Common myeloid progenitor, CD34-positive (primary cell): ENCODE measurements at regions of chr21 and their contacts with region 1.

Region 1: DNA sequence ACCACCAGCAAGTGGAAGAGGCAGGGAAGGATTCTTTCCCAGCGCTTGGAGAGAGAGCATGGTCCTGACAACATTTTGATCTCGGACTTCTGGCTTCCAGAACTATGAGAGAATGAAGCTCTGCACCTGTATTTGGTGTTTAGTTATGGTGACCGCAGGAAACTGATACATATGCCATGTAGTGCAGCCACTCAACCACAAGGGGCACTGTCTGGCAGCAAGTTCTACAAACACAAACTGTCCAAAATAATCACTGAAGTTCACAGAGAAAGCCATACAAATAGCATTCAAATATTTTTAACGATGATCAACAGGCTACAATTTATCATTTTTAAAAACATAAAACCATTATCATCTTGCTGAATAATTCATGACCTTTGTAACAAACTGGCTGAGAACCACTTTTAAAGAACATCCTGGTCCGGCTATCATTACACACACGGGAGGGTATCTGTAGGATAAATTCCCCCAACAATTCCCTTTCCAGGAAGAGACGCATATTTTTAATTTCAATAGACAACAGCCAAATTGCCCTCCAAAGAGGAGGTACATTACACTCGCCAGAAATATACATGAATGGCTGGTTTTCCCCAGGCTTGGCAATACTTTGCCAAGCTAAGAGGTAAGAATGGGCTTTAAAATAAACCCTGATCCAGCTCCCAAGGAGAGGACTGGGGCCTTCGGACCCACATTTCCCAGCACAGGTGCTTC is 9.2 kb upstream of the CBR3 start:
- DNase-seq: peak; percentile 56 to 79 (median 76)
- H3K4me3 ChIP-seq: no peak overlapping the region
- H3K27ac ChIP-seq: no peak overlapping the region
- H3K4me1 ChIP-seq: peaks cover 0 to 17% (median 13%) of the 10 kb centered on the region in 4 experiments
- H3K27me3 ChIP-seq: no peaks in the 10 kb centered on the region

Region 2: GRCh38 chr21:35974818-35975217 is 150.8 kb before region 1 on chr21:
- CTCF ChIA-PET with region 1: no interaction called
- POLR2A ChIA-PET with region 1: no interaction called
- DNase-seq: no peak
- H3K4me3 ChIP-seq: no peak overlapping the region
- H3K27ac ChIP-seq: no peak overlapping the region
- H3K4me1 ChIP-seq: no peaks in the 10 kb centered on the region
- H3K27me3 ChIP-seq: peaks cover 0 to 10% (median 2%) of the 10 kb centered on the region in 5 experiments

Region 3: GRCh38 chr21:36113647-36114428 is 11.8 kb before region 1 on chr21:
- CTCF ChIA-PET with region 1: interaction called, 10 read pairs
- POLR2A ChIA-PET with region 1: no interaction called
- DNase-seq: peak in 2 of 3 donors; percentile 41 to 57
- H3K4me3 ChIP-seq: peak overlapping the region in 4 of 7 experiments; percentile 24 to 58 (median 42)
- H3K27ac ChIP-seq: no peak overlapping the region
- H3K4me1 ChIP-seq: peaks cover 0 to 11% (median 6%) of the 10 kb centered on the region in 4 experiments
- H3K27me3 ChIP-seq: no peaks in the 10 kb centered on the region

Region 4: GRCh38 chr21:36156339-36156814 is 30.7 kb after region 1 on chr21:
- CTCF ChIA-PET with region 1: no interaction called
- POLR2A ChIA-PET with region 1: no interaction called
- DNase-seq: peak; percentile 96 to 98 (median 98)
- H3K4me3 ChIP-seq: peak overlapping the region; percentile 74 to 99 (median 86)
- H3K27ac ChIP-seq: peak overlapping the region in 1 of 2 experiments; percentile 61
- H3K4me1 ChIP-seq: peaks cover 3 to 20% (median 11%) of the 10 kb centered on the region in 4 experiments
- H3K27me3 ChIP-seq: peaks cover 0 to 4% (median 0%) of the 10 kb centered on the region in 5 experiments